ENCODE measurements at regions of chr5 and their contacts with region 1.

Region 1: GRCh38 chr5:141628175-141628788 is 8.4 kb downstream of the HDAC3 start:
- DNase-seq: no peak
- ATAC-seq: no peak
- H3K4me3 ChIP-seq: no peak overlapping the region
- H3K27ac ChIP-seq: no peak overlapping the region
- H3K4me1 ChIP-seq: peaks cover 11% of the 10 kb centered on the region
- H3K27me3 ChIP-seq: no peaks in the 10 kb centered on the region
- CTCF ChIP-seq: no peak
- POLR2A ChIP-seq: no peak

Region 2: DNA sequence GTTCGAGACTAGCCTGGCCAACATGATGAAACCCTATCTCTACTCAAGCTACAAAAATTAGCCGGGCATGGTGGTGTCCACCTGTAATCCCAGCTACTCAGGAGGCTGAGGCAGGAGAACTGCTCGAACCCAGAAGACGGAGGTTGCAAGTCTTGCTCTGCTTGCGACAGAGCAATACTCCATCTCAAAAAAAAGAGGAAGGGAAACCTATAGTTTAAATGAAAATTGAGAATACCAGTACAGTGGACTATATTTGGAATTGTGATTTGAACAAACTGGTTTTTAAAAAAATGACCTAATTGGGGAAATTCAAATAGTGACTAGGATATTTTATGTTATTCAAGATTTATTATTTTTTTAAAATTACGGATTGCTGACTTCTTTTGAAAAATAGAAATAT is 42.7 kb before region 1 on chr5:
- intact Hi-C with region 1: loop called (anchors 5 kb)
- DNase-seq: no peak
- ATAC-seq: no peak
- H3K4me3 ChIP-seq: no peak overlapping the region
- H3K27ac ChIP-seq: no peak overlapping the region
- H3K4me1 ChIP-seq: peaks cover 5% of the 10 kb centered on the region
- H3K27me3 ChIP-seq: no peaks in the 10 kb centered on the region
- CTCF ChIP-seq: no peak
- POLR2A ChIP-seq: no peak

Region 3: GRCh38 chr5:141757402-141757801 is 129.1 kb after region 1 on chr5:
- intact Hi-C with region 1: no loop called
- DNase-seq: peak in 3 of 4 donors; percentile 15 to 28 (median 23)
- ATAC-seq: no peak
- H3K4me3 ChIP-seq: no peak overlapping the region
- H3K27ac ChIP-seq: no peak overlapping the region
- H3K4me1 ChIP-seq: no peaks in the 10 kb centered on the region
- H3K27me3 ChIP-seq: peaks cover 0 to 7% of the 10 kb centered on the region in 2 donors
- CTCF ChIP-seq: peak in 4 of 7 experiments; percentile 23 to 39 (median 26)
- POLR2A ChIP-seq: no peak

Region 4: DNA sequence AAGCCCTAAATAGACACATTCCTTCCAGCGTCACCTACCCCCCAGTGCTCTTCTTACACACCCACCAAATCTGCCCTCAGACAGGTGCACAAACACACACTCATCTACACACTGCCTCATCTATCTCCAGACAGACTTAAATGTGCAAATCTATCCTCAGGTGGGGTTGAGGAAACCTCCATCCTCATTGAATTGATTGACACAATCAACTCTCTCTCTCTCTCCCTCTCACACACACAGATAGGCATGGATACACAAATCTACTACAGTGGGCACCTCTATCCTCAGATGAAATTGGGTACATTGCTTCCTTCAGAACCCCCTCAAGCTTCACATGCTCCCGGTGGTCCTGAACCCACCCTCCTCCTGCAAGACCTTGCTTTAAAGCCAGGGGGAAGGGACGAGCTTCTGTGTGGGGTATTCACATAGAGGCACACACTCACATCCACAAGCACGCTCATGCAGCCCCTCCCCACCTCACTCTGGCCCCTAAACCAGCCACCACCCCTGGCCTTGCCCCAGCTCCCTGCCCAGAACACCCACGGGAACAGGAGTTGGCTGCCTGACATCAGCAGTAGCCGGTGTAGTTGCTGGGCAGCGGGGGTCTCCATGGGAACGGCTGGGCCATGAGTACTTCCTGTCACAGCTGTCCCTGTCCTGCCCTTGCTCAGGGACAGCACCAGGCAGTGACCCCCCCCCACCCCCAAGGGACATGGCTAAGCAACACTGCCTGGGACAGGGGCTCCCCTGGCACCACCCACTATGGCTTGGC is 227.2 kb after region 1 on chr5:
- intact Hi-C with region 1: no loop called
- DNase-seq: peak; percentile 37 to 75 (median 66)
- ATAC-seq: peak; percentile 38
- H3K4me3 ChIP-seq: no peak overlapping the region
- H3K27ac ChIP-seq: peak overlapping the region in 2 of 4 donors; percentile 25 to 38
- H3K4me1 ChIP-seq: peaks cover 22% of the 10 kb centered on the region
- H3K27me3 ChIP-seq: no peaks in the 10 kb centered on the region
- CTCF ChIP-seq: no peak
- POLR2A ChIP-seq: no peak

Measured in body of pancreas (tissue), 4 donors.